SK-N-SH (cell line): ENCODE measurements at regions of chr1 and their contacts with region 1.

Region 1: DNA sequence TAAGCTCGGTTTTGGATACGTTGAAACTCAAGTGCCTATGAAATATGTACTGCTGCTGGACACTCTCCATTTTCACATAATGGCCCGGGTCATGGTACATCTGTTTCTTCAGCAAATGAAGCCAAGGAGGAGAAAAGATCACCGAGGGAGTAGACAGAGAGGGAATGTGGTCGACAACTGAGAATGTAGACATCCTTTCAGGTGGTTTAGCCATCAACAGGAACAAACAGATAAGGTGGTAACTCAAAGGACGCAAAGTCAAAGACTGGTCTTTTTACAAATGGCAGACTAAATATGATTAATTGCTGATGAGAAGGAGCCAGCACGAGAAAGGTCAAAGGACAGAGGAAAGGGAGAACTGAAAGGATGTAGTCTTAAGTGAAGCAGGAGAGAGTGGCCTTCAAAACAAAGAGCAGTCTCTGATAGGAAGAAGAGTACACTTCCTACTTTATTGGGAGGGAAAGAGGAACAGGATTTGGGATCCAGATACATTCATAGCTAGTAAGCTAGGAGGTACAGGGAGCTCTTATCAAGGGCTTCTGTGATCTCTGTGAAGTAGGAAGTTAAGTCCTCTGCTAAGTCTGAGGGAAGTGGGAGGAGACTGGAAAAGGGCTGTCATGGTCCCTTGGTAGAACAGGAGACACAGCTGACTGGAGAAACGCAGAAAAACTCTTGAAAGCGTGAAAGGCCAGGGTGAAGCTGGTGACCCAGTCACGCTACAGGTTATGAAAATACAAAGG is 28.3 kb downstream of the NUP133 start:
- DNase-seq: no peak
- H3K4me3 ChIP-seq: 0 out of 4 replicates have a peak overlapping the region, but pooled peaks of 1 of the 2 experiments have one; percentile 5
- H3K27ac ChIP-seq: no peak overlapping the region
- H3K4me1 ChIP-seq: peaks cover 0 to 7% of the 10 kb centered on the region in 2 experiments; a peak in 1 of 4 replicates
- H3K27me3 ChIP-seq: no peaks in the 10 kb centered on the region
- CTCF ChIP-seq: no peak
- EP300 ChIP-seq: no peak
- RAD21 ChIP-seq: no peak

Region 2: DNA sequence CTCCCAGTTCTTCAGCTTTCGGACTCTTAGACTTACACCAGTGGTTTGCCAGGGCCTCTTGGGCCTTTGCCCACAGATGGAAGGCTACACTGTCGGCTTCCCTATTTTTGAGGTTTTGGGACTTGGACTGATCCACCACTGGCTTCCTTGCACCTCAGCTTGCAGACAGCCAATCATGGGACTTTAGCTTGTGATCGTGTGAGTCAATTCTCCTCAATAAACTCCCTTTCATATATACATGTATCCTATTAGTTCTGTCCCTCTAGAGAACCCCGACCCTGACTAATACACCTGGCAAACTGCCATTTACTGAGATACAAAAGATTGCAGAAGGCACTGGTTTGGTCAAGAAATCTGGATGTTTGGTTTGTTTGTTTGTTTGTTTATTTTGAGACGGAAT is 215.3 kb before region 1 on chr1:
- CTCF ChIA-PET with region 1: interaction called, 143 read pairs
- POLR2A ChIA-PET with region 1: no interaction called
- DNase-seq: no peak
- H3K4me3 ChIP-seq: no peak overlapping the region
- H3K27ac ChIP-seq: no peak overlapping the region
- H3K4me1 ChIP-seq: no peaks in the 10 kb centered on the region
- H3K27me3 ChIP-seq: no peaks in the 10 kb centered on the region
- CTCF ChIP-seq: no peak
- EP300 ChIP-seq: no peak
- RAD21 ChIP-seq: no peak

Region 3: GRCh38 chr1:229279242-229279641 is 200.6 kb before region 1 on chr1:
- CTCF ChIA-PET with region 1: interaction called, 10 read pairs
- POLR2A ChIA-PET with region 1: no interaction called
- DNase-seq: no peak
- H3K4me3 ChIP-seq: no peak overlapping the region
- H3K27ac ChIP-seq: no peak overlapping the region
- H3K4me1 ChIP-seq: peaks cover 0 to 4% of the 10 kb centered on the region in 2 experiments; a peak in 2 of 4 replicates
- H3K27me3 ChIP-seq: no peaks in the 10 kb centered on the region
- CTCF ChIP-seq: no peak
- EP300 ChIP-seq: no peak
- RAD21 ChIP-seq: no peak

Region 4: DNA sequence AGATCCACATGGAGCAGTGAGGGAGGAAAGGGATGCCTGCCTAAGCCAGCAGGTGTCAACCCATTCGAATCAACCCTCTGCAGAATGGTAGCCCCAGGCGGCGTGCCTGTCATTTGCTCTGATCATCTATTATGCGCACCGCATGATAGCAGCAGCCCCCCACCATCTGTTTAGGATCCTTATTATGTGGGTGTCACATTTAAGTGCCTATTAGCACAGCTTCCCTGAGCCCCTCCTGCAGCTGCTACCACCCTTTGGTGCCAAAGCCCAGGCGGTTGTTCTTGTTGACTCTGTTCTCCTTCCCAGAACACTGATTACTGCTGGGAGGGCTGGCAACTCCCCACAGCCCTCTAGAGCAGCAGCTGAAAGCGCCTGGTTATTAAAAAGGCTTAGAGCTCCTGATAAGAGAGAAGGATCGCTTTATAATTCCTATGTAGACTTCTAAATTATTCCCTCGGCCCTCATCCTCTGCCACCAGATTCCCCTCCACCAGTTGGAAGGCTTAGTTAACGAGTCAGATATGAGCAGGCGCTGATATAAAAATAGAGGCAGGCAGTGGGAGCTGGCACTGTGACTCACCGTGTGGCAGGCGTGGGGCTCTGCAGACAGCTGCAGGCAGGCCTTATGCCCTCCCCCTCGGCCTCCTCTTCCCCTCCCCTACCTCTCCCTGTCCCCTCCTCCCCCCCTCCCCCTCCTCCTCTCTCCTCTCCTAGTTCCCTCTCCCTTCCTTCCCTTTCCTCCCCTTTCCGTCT is 69.0 kb before region 1 on chr1:
- CTCF ChIA-PET with region 1: interaction called, 11 read pairs
- POLR2A ChIA-PET with region 1: no interaction called
- DNase-seq: peak; percentile 86
- H3K4me3 ChIP-seq: peak overlapping the region in 1 of 2 experiments; percentile 12; a peak in 2 of 4 replicates
- H3K27ac ChIP-seq: peak overlapping the region; percentile 46 to 95
- H3K4me1 ChIP-seq: peaks cover 10 to 43% of the 10 kb centered on the region in 2 experiments
- H3K27me3 ChIP-seq: no peaks in the 10 kb centered on the region
- CTCF ChIP-seq: no peak
- EP300 ChIP-seq: no peak; a peak in 1 of 4 replicates
- RAD21 ChIP-seq: no peak; the same call in none of the 2 replicates

Region 5: DNA sequence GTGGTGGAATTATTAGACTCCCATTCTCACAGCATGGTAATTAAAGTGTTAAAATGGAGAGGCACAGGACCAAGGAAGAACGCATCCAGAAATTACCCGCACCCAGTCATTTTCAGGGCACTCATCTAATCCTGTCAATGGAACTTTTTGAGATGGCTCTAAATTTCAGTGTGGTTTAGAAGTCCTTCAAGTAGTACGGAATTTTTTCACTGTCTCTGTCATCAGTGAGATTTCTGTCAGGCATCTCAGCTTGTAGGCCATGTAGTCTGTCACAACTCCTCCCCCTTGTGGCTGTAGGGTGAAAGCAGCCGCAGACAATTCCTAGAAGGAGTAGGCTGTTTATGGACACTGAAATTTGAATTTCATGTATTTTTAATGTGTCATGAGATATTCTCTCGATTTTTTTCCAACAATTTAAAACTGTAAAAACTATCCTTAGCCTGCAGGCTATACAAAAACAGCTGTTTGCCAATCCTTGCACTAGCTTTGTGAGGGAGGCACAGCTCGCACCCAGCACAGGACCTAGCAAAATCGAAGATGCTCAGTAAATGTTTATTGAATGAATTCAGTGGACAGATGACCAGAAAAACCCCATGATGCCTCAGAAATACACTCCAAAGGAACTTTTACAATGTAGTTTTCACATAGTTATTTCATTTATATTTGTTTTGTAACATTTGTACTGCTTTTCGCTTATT is 34.9 kb after region 1 on chr1:
- CTCF ChIA-PET with region 1: interaction called, 15 read pairs
- POLR2A ChIA-PET with region 1: no interaction called
- DNase-seq: peak; percentile 66
- H3K4me3 ChIP-seq: peak overlapping the region in 1 of 2 experiments; percentile 21; a peak in 1 of 4 replicates
- H3K27ac ChIP-seq: no peak overlapping the region
- H3K4me1 ChIP-seq: no peaks in the 10 kb centered on the region; a peak in 1 of 4 replicates
- H3K27me3 ChIP-seq: no peaks in the 10 kb centered on the region
- CTCF ChIP-seq: peak; percentile 87
- EP300 ChIP-seq: no peak
- RAD21 ChIP-seq: peak; percentile 76

Region 6: DNA sequence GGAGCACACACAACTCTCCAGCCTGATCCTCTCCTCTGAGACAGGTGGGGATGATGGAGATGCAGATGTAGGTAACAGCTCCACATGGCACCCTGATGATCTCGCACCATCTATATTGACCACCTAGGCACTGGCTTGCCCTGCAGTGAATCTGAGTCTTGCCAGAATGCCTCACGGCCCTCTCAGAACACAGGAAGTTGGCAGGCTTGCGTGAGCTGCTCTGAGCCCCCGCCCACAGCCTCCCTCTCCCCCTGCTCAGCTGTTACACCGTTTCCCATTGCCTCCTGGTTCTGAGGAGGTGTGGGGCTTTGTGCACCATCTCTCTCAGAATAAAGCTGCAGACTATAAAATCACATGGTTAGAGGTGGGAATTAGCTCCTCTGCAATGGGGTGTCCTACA is 194.2 kb after region 1 on chr1:
- CTCF ChIA-PET with region 1: no interaction called
- POLR2A ChIA-PET with region 1: no interaction called
- DNase-seq: no peak
- H3K4me3 ChIP-seq: no peak overlapping the region
- H3K27ac ChIP-seq: no peak overlapping the region
- H3K4me1 ChIP-seq: peaks cover 0 to 2% of the 10 kb centered on the region in 2 experiments; a peak in 1 of 4 replicates
- H3K27me3 ChIP-seq: no peaks in the 10 kb centered on the region
- CTCF ChIP-seq: no peak
- EP300 ChIP-seq: no peak
- RAD21 ChIP-seq: no peak

Region 7: GRCh38 chr1:229803626-229804217 is 323.9 kb after region 1 on chr1:
- CTCF ChIA-PET with region 1: no interaction called
- POLR2A ChIA-PET with region 1: no interaction called
- DNase-seq: no peak
- H3K4me3 ChIP-seq: no peak overlapping the region
- H3K27ac ChIP-seq: no peak overlapping the region
- H3K4me1 ChIP-seq: no peaks in the 10 kb centered on the region
- H3K27me3 ChIP-seq: no peaks in the 10 kb centered on the region
- CTCF ChIP-seq: no peak
- EP300 ChIP-seq: no peak
- RAD21 ChIP-seq: no peak